Activated B cell treated with CpG ODN at 0.5 μM for 24 hours (primary cell): ENCODE measurements at regions of chr3 and their contacts with region 1.

Region 1: DNA sequence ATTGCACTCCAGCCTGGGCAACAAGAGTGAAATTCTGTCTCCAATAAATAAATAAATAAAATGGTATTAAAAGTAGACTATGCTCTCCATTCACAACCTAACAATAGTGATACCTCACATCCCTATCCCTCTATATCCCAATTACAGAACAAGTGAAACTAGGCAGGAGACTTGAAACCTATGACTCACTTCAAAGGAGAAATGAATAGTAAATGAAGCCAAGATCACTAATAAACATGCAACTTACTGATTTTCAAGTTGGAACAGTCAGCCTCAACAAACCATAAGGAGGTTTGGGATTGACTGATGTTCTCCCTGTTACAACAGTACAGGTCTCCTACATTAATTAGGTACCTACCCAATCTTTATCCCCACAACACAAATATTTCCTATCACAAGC is 103.4 kb downstream of the GSK3B start:
- DNase-seq: no peak
- ATAC-seq: no peak
- H3K4me3 Mint-ChIP-seq: no peak overlapping the region
- H3K27ac Mint-ChIP-seq: no peak overlapping the region
- H3K4me1 Mint-ChIP-seq: peaks cover 19% of the 10 kb centered on the region
- H3K27me3 Mint-ChIP-seq: no peaks in the 10 kb centered on the region
- CTCF ChIP-seq: no peak

Region 2: GRCh38 chr3:119637679-119638525 is 353.0 kb before region 1 on chr3:
- CTCF ChIA-PET with region 1: no interaction called
- POLR2A ChIA-PET with region 1: no interaction called
- intact Hi-C with region 1: no loop called
- DNase-seq: no peak
- ATAC-seq: peak; percentile 54
- H3K4me3 Mint-ChIP-seq: peak overlapping the region; percentile 78
- H3K27ac Mint-ChIP-seq: peak overlapping the region; percentile 98
- H3K4me1 Mint-ChIP-seq: peaks cover 44% of the 10 kb centered on the region
- H3K27me3 Mint-ChIP-seq: no peaks in the 10 kb centered on the region
- CTCF ChIP-seq: no peak

Region 3: DNA sequence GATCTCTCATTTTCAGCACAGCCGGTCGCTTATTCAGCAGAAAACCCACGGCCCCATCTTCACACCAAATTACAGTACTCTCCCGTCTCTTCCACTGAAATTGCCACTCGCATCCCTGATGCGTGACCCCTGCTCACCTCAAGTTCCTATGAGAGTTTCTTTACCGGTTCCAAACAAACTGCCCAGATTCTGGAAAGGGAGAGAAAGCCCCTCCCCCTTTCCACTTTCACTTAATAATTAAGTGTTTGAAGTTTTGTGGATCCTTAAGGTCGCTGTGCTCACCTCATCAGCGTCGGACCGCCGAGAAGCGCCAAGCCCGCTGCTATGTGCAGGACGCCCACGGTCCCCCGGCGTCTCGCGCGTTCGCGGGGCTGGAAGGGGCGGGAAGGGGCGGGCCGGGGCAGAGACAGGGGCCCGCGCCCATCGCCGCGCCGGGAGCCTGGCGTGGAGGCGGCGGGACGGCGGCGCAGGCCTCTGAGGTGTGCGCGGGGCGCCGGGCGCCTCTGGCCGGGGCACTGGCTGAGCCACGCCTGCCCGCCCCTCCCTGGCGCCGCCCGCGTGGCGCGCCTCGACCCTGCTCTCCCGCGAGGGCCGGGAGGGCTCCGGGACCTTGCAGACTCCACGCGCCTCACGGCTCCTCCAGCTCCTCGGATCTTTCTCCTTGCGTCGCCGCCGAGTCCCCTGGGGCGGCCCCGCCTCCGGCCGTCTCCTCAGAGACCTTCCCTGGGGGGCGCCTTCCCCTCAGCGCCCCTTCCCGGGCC is 294.0 kb after region 1 on chr3 and contains the start of gene GPR156:
- CTCF ChIA-PET with region 1: no interaction called
- POLR2A ChIA-PET with region 1: no interaction called
- intact Hi-C with region 1: no loop called
- DNase-seq: no peak
- ATAC-seq: peak; percentile 14
- H3K4me3 Mint-ChIP-seq: peak within 1 kb of the TSS; percentile 25
- H3K27ac Mint-ChIP-seq: no peak within 1 kb of the TSS
- H3K4me1 Mint-ChIP-seq: peaks cover 4% of the 10 kb centered on the region
- H3K27me3 Mint-ChIP-seq: peaks cover 45% of the 10 kb centered on the region
- CTCF ChIP-seq: no peak
- total RNA-seq, gene GPR156: 0.24 TPM in 2 replicates

Region 4: GRCh38 chr3:120324192-120324591 is 333.3 kb after region 1 on chr3:
- CTCF ChIA-PET with region 1: no interaction called
- POLR2A ChIA-PET with region 1: no interaction called
- intact Hi-C with region 1: no loop called
- DNase-seq: no peak
- ATAC-seq: no peak
- H3K4me3 Mint-ChIP-seq: no peak overlapping the region
- H3K27ac Mint-ChIP-seq: peak overlapping the region; percentile 37
- H3K4me1 Mint-ChIP-seq: peaks cover 12% of the 10 kb centered on the region
- H3K27me3 Mint-ChIP-seq: no peaks in the 10 kb centered on the region
- CTCF ChIP-seq: no peak

Region 5: GRCh38 chr3:120382941-120383447 is 392.1 kb after region 1 on chr3:
- CTCF ChIA-PET with region 1: no interaction called
- POLR2A ChIA-PET with region 1: interaction called, 15 read pairs
- intact Hi-C with region 1: no loop called
- DNase-seq: no peak
- ATAC-seq: no peak
- H3K4me3 Mint-ChIP-seq: no peak overlapping the region
- H3K27ac Mint-ChIP-seq: no peak overlapping the region
- H3K4me1 Mint-ChIP-seq: no peaks in the 10 kb centered on the region
- H3K27me3 Mint-ChIP-seq: peaks cover 2% of the 10 kb centered on the region
- CTCF ChIP-seq: no peak

Region 6: DNA sequence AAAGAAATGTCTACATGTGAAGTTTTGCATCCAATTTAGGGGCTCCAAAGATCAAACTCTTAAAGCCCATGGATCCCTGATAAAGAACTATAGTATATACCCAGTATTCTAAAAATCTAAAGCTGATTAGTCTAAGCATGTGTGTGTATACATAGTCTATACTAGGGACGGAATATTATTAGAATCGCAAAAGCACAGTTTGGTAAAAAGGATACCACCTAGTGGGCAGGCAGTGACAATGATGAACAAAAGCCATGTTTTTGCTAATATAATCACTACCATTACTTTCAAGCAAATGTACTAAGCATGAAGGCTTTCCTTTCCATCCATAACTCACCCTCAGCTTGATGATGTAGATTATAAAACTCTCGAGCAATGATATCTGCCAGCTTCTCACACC is 1538.4 kb after region 1 on chr3:
- CTCF ChIA-PET with region 1: no interaction called
- POLR2A ChIA-PET with region 1: no interaction called
- intact Hi-C with region 1: no loop called
- DNase-seq: no peak
- ATAC-seq: no peak
- H3K4me3 Mint-ChIP-seq: no peak overlapping the region
- H3K27ac Mint-ChIP-seq: no peak overlapping the region
- H3K4me1 Mint-ChIP-seq: no peaks in the 10 kb centered on the region
- H3K27me3 Mint-ChIP-seq: no peaks in the 10 kb centered on the region
- CTCF ChIP-seq: no peak